ENCODE measurements at regions of chr19 and their contacts with region 1.

Region 1: DNA sequence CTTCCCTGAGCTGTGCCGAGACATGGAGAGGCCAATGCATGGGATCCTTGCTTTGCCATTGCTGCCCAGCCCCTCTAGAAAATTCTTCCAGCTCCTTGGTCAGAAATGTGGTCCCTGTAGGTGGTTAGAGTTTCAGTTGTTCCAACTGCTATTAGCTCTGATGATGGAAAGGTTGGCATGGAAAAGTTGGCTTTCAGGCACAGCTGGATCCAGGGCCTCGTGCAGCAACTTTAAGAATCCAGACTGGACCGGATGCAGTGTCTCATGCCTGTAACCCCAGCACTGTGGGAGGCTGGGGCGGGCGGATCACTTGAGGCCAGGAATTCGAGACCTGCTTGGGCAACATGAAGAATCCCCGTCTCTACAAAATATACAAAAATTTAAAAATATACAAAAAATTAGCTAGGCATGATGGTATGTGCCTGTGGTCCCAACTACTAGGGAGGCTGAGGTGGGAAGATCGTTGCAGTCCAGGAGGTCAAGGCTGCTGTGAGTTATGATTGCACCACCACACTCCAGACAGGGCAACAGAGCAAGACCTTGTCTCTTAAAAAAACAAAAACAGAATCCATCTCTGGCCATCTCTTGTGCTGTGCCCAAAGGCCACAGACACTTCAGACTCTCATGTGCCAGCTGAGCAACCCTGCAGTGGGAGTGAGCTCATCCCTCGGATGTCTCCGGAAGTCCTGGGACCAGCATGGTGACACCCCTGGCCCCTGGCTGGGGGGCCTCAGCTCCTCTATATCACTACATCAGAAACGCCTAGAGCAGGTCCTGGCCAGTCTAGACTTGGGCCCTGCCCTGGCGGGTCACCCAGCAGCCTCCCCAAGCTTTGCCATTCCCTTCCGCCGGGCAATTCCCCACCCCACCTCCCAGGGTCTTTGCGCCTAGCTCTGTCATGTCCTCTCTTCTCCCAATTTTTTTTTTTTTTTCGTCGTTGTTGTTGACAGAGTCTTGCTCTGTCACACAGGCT is 16.8 kb downstream of the MEX3D start:
- DNase-seq: no peak
- ATAC-seq: no peak
- H3K4me3 ChIP-seq: no peak overlapping the region
- H3K4me3 Mint-ChIP-seq: no peak overlapping the region
- H3K27ac ChIP-seq: no peak overlapping the region
- H3K27ac Mint-ChIP-seq: no peak overlapping the region
- H3K4me1 ChIP-seq: no peaks in the 10 kb centered on the region
- H3K4me1 Mint-ChIP-seq: peaks cover under 1% of the 10 kb centered on the region
- H3K27me3 ChIP-seq: peaks cover 0 to 2% of the 10 kb centered on the region in 2 experiments
- H3K27me3 Mint-ChIP-seq: peaks cover 12% of the 10 kb centered on the region
- CTCF ChIP-seq: no peak

Region 2: GRCh38 chr19:1794424-1795172 is 243.2 kb after region 1 on chr19:
- CTCF ChIA-PET with region 1: interaction called, 18 read pairs
- POLR2A ChIA-PET with region 1: no interaction called
- intact Hi-C with region 1: loop called (anchors 1 to 10 kb)
- DNase-seq: no peak
- ATAC-seq: no peak
- H3K4me3 ChIP-seq: no peak overlapping the region
- H3K4me3 Mint-ChIP-seq: no peak overlapping the region
- H3K27ac ChIP-seq: no peak overlapping the region
- H3K27ac Mint-ChIP-seq: no peak overlapping the region
- H3K4me1 ChIP-seq: peaks cover 5% of the 10 kb centered on the region
- H3K4me1 Mint-ChIP-seq: no peaks in the 10 kb centered on the region
- H3K27me3 ChIP-seq: peaks cover 0 to 11% of the 10 kb centered on the region in 2 experiments
- H3K27me3 Mint-ChIP-seq: peaks cover 9% of the 10 kb centered on the region
- CTCF ChIP-seq: no peak

Measured in CD8-positive, alpha-beta T cell (primary cell).